ENCODE measurements at regions of chr21 and their contacts with region 1.

Region 1: DNA sequence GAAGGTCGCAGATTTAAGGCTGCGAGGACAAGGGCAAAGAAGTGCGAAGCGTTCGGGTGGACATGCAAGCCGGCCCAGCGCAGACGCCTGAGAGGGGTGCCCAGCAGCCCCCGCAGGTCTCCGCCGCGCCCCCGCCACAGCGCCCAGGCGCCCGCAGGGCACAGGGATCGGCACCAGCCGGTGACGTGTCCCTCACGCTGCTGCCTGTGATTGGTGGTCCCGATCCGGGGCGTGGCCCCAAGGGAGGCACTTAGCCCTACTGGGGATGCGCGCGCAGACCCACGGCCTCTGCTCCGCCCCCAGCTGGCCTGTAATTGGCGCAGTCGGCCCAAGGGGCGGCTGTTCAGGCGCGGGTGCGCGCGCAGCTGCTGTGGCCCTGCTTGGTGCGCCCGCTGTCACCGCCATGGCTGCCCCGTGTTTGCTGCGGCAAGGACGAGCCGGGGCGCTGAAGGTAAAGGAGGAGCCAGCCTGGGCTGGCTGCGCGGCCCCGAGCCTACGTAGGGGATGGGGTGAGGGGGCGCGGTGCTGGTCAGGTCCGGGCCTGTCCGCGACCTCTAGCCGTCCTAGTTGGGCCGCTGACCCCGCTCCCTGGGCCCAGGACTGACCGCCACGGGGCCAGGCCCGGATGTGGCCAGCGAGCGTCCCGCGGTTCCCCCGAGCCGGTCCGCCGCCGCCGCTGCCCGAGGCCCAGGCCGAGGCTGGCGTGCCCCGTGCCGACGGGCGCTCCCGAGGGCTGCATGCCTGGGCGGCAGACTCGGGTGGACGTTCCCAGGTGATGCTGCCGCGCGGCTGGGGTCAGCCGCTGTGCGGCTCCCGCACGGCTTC is at the start of gene NDUFV3:
- DNase-seq: peak; percentile 99
- H3K4me3 Mint-ChIP-seq: peak within 1 kb of the TSS; percentile 82
- H3K27ac Mint-ChIP-seq: peak within 1 kb of the TSS; percentile 96
- H3K4me1 Mint-ChIP-seq: peaks cover 6% of the 10 kb centered on the region
- H3K27me3 Mint-ChIP-seq: no peaks in the 10 kb centered on the region
- CTCF ChIP-seq: no peak
- total RNA-seq, gene NDUFV3: 70.0 and 79.7 TPM in 2 replicates

Region 2: DNA sequence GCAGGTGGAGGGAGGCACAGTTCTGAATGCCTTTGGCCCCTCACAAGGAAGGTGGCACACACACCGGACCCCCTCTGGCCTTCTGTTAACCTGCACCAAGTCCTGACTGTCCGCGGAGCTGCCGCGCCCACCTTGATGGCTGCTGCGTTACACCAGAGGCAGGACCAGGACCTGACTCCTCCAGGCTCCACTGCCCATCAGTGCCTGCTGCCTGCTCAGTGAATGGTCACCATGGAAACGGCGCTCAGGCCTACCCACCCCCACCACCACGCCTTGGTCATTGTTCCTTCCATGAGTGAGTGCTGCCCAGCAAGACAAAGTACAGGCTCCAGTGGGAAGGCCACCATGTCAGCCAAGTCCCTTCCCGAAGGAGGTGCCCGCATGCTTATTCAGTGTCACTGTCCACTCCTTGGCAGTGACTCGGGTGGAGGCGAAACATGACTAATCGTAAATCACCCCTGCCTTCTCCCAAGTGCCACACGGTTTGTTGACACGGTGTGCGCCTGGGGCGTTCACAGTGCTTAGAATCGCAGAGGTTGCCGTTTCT is 322.2 kb before region 1 on chr21:
- CTCF ChIA-PET with region 1: no interaction called
- POLR2A ChIA-PET with region 1: no interaction called
- intact Hi-C with region 1: no loop called
- DNase-seq: no peak
- H3K4me3 Mint-ChIP-seq: no peak overlapping the region
- H3K27ac Mint-ChIP-seq: no peak overlapping the region
- H3K4me1 Mint-ChIP-seq: no peaks in the 10 kb centered on the region
- H3K27me3 Mint-ChIP-seq: no peaks in the 10 kb centered on the region
- CTCF ChIP-seq: no peak

Region 3: DNA sequence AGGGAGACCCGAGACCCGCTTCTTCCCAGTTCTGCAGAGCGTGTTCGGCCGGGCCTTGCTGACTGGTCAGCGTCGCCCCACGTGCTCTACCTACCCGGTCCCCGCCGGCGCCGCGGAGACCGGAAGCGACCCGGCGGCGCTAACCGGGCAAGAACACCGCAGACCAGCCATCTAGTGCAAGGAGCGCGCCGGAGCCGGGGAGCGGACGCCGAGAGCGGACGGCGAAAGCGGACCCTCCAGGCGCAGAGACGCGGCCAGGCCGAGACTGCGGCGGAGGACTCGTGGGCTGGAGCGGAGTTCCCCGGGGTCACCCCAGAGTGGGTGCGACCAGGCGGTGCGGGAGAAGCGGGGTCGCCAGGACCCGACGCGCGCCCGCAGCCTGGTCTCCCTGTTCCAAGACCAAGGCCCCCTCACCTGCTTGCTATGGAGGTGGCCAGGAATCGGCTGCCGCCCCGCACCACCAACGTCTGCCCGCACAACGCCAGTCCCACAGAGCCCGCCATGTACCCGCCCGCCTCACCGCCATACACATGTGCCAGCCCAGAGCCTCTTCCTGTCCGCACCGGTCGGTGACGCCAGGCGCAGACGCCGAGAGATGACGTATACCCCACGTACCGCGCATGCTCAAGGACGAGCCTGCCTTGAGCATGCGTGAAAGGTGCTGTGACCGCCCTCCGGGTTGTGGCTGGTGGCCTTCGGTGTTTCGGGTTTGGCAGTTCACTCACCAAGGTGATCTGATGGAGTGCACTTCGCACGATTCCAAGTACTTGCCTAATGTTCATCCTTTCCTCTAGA is 14.0 kb before region 1 on chr21 and contains the start of gene WDR4:
- CTCF ChIA-PET with region 1: interaction called, 4 read pairs
- POLR2A ChIA-PET with region 1: interaction called, 105 read pairs
- intact Hi-C with region 1: no loop called
- DNase-seq: peak; percentile 96
- H3K4me3 Mint-ChIP-seq: peak within 1 kb of the TSS; percentile 93
- H3K27ac Mint-ChIP-seq: peak within 1 kb of the TSS; percentile 94
- H3K4me1 Mint-ChIP-seq: peaks cover 10% of the 10 kb centered on the region
- H3K27me3 Mint-ChIP-seq: no peaks in the 10 kb centered on the region
- CTCF ChIP-seq: no peak
- total RNA-seq, gene WDR4: 20.7 and 34.4 TPM in 2 replicates

Region 4: GRCh38 chr21:42956819-42957632 is 63.9 kb after region 1 on chr21:
- CTCF ChIA-PET with region 1: no interaction called
- POLR2A ChIA-PET with region 1: interaction called, 11 read pairs
- intact Hi-C with region 1: loop called (anchors 10 kb)
- DNase-seq: no peak
- H3K4me3 Mint-ChIP-seq: no peak overlapping the region
- H3K27ac Mint-ChIP-seq: no peak overlapping the region
- H3K4me1 Mint-ChIP-seq: peaks cover 5% of the 10 kb centered on the region
- H3K27me3 Mint-ChIP-seq: no peaks in the 10 kb centered on the region
- CTCF ChIP-seq: no peak

Region 5: DNA sequence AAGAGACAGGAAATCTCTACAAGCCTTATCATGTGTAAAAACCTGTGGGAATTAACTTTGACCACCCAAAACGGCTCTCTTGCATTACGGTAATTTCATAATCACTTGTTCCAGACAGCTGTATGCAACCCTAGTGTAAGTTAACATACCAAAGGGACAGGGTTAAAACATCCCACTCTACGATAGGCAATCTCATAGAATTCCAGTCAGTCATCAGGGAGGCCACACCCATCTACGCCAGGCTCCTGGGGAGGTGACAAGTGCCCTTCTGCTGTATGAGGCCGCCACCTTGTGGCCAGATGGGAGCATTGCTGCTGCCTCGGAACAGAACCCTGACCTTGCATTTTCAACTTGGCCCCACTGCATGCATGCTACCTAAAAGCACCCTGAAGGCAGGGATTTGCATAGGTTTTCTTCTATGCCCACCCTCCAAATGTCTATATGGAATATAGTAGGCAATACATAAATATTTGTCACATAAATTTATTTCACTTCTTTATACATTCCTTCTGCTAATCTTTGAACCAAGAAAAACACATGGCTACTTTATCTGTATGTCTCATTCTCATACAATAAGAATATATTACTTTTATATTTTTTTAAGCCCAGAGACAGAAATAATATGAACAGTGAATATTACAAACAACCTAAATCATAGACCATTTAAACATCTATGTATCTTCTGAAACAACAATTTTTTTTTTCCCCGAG is 753.6 kb after region 1 on chr21:
- CTCF ChIA-PET with region 1: no interaction called
- POLR2A ChIA-PET with region 1: no interaction called
- intact Hi-C with region 1: loop called (anchors 5 kb)
- DNase-seq: peak; percentile 96
- H3K4me3 Mint-ChIP-seq: peak overlapping the region; percentile 50
- H3K27ac Mint-ChIP-seq: peak overlapping the region; percentile 88
- H3K4me1 Mint-ChIP-seq: peaks cover 26% of the 10 kb centered on the region
- H3K27me3 Mint-ChIP-seq: no peaks in the 10 kb centered on the region
- CTCF ChIP-seq: peak; percentile 97